ENCODE measurements at regions of chr1 and their contacts with region 1.

Region 1: GRCh38 chr1:182962554-182963115 is 9.7 kb upstream of the SHCBP1L start:
- DNase-seq: peak; percentile 72 to 85
- ATAC-seq: peak; percentile 96 to 100 (median 99)
- H3K4me3 ChIP-seq: peak overlapping the region in 6 of 10 donors; percentile 26 to 39 (median 34)
- H3K27ac ChIP-seq: peak overlapping the region in 9 of 10 donors; percentile 13 to 83 (median 67)
- H3K4me1 ChIP-seq: peaks cover 0 to 10% (median 6%) of the 10 kb centered on the region in 9 donors
- H3K27me3 ChIP-seq: no peaks in the 10 kb centered on the region
- CTCF ChIP-seq: peak; percentile 89 to 96 (median 92)

Region 2: GRCh38 chr1:182206626-182207239 is 755.9 kb before region 1 on chr1:
- intact Hi-C with region 1: no loop called
- DNase-seq: peak; percentile 42 to 66
- ATAC-seq: peak; percentile 77 to 93 (median 86)
- H3K4me3 ChIP-seq: no peak overlapping the region
- H3K27ac ChIP-seq: peak overlapping the region in 9 of 10 donors; percentile 16 to 73 (median 54)
- H3K4me1 ChIP-seq: peaks cover 0 to 13% (median 6%) of the 10 kb centered on the region in 9 donors
- H3K27me3 ChIP-seq: no peaks in the 10 kb centered on the region
- CTCF ChIP-seq: no peak

Region 3: DNA sequence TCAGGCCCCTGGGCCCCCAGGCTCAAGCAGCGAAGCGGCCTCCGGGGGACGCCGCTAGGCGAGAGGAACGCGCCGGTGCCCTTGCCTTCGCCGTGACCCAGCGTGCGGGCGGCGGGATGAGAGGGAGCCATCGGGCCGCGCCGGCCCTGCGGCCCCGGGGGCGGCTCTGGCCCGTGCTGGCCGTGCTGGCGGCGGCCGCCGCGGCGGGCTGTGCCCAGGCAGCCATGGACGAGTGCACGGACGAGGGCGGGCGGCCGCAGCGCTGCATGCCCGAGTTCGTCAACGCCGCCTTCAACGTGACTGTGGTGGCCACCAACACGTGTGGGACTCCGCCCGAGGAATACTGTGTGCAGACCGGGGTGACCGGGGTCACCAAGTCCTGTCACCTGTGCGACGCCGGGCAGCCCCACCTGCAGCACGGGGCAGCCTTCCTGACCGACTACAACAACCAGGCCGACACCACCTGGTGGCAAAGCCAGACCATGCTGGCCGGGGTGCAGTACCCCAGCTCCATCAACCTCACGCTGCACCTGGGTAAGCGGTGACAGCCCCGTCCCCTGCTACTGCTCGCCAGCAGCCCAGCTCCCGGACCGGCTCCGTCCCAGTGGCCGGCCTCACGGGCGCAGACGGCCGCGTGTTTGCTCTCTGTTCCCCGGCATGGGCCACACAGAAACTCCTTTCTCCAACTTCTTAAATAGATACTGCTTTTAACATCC is 61.1 kb after region 1 on chr1:
- intact Hi-C with region 1: loop called (anchors 2 to 10 kb)
- DNase-seq: peak; percentile 57 to 63
- ATAC-seq: peak; percentile 26 to 70 (median 44)
- H3K4me3 ChIP-seq: peak overlapping the region; percentile 55 to 98 (median 83)
- H3K27ac ChIP-seq: peak overlapping the region; percentile 99 to 100 (median 100)
- H3K4me1 ChIP-seq: peaks cover 3 to 70% (median 59%) of the 10 kb centered on the region in 9 donors
- H3K27me3 ChIP-seq: peaks cover 0 to 19% (median 0%) of the 10 kb centered on the region in 7 donors
- CTCF ChIP-seq: peak in 8 of 9 donors; percentile 13 to 63 (median 45)

Region 4: GRCh38 chr1:183116416-183116815 is 153.8 kb after region 1 on chr1:
- intact Hi-C with region 1: loop called in 3 of 10 experiments (anchors 5 to 10 kb)
- DNase-seq: no peak
- ATAC-seq: no peak
- H3K4me3 ChIP-seq: no peak overlapping the region
- H3K27ac ChIP-seq: no peak overlapping the region
- H3K4me1 ChIP-seq: no peaks in the 10 kb centered on the region
- H3K27me3 ChIP-seq: no peaks in the 10 kb centered on the region
- CTCF ChIP-seq: no peak

Region 5: GRCh38 chr1:183139281-183139942 is 176.8 kb after region 1 on chr1:
- intact Hi-C with region 1: loop called in 3 of 10 experiments (anchors 10 kb)
- DNase-seq: no peak
- ATAC-seq: peak in 3 of 8 donors; percentile 49 to 68 (median 51)
- H3K4me3 ChIP-seq: no peak overlapping the region
- H3K27ac ChIP-seq: peak overlapping the region; percentile 6 to 83 (median 48)
- H3K4me1 ChIP-seq: peaks cover 0 to 49% (median 26%) of the 10 kb centered on the region in 9 donors
- H3K27me3 ChIP-seq: no peaks in the 10 kb centered on the region
- CTCF ChIP-seq: no peak

Region 6: DNA sequence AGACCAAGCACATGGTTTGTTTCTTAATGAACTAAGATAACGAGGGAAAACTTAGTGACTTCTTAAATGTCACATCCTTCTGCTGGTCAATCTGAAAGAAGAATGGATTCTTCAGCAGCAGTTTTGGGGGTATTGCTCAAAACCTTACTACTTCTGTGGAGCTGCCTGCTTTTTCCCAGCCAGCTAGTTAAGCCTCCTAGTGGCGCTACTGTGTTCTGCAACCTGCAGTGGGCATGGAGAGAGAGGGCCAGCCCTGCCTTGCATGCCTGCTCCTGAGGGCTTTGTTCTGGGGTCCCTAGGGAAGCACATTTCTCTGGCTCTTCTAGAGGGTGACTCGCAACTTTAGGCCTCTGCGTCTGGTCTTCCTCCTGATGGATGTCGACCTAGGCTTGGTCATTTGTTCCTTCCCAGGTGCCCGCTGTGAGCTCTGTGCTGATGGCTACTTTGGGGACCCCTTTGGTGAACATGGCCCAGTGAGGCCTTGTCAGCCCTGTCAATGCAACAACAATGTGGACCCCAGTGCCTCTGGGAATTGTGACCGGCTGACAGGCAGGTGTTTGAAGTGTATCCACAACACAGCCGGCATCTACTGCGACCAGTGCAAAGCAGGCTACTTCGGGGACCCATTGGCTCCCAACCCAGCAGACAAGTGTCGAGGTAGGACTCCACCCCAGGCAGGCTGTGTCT is 265.5 kb after region 1 on chr1:
- intact Hi-C with region 1: loop called (anchors 2 to 10 kb)
- DNase-seq: peak; percentile 44 to 45
- ATAC-seq: peak in 6 of 8 donors; percentile 61 to 83 (median 73)
- H3K4me3 ChIP-seq: no peak overlapping the region
- H3K27ac ChIP-seq: no peak overlapping the region
- H3K4me1 ChIP-seq: peaks cover 0 to 10% (median 0%) of the 10 kb centered on the region in 9 donors
- H3K27me3 ChIP-seq: no peaks in the 10 kb centered on the region
- CTCF ChIP-seq: peak; percentile 46 to 86 (median 79)

Region 7: DNA sequence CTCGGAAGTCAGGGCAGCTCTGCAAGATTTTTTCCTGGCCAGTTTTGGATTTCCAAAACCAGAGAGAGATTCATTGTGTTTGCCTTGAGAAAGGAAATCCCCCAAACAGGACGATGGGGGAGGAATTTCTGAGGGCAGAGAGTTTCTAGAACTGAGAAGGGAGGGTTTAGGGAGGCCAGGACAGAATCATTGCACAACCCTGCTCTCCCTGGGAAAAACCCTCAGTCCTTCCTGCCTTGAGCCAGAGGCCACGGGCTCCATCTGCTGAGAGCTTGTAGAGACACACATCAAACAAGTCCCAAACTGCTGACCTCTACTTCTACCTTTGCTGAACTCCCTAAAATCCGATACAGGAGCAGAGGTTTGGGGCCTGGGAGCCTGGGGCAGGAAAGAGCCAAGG is 355.8 kb after region 1 on chr1:
- intact Hi-C with region 1: loop called in 6 of 10 experiments (anchors 5 to 10 kb)
- DNase-seq: peak; percentile 73 to 86
- ATAC-seq: peak; percentile 94 to 98 (median 97)
- H3K4me3 ChIP-seq: no peak overlapping the region
- H3K27ac ChIP-seq: peak overlapping the region; percentile 47 to 89 (median 84)
- H3K4me1 ChIP-seq: peaks cover 7 to 35% (median 27%) of the 10 kb centered on the region in 9 donors
- H3K27me3 ChIP-seq: no peaks in the 10 kb centered on the region
- CTCF ChIP-seq: peak; percentile 48 to 90 (median 77)